Activated T-helper 2 cell treated with anti-CD3 and anti-CD28 coated beads, Interferon-gamma antibody, Interleukin-2, Interleukin-4, amounts not matched to agents 10 μg/mL and 5 μg/mL and 100 μg/mL, durations not matched to agents 14 hours and 24 hours and 36 hours (primary cell): ENCODE measurements at regions of chr1 and their contacts with region 1.

Region 1: GRCh38 chr1:205199090-205199930 is 12.2 kb downstream of the DSTYK start:
- DNase-seq: no peak
- H3K4me3 Mint-ChIP-seq: peak overlapping the region; percentile 47
- H3K27ac Mint-ChIP-seq: peak overlapping the region; percentile 94
- H3K4me1 Mint-ChIP-seq: peaks cover 57% of the 10 kb centered on the region
- H3K27me3 Mint-ChIP-seq: no peaks in the 10 kb centered on the region

Region 2: GRCh38 chr1:205121660-205122488 is 77.4 kb before region 1 on chr1 and contains the start of gene RBBP5:
- intact Hi-C with region 1: loop called (anchors 1 kb)
- DNase-seq: peak; percentile 90
- H3K4me3 Mint-ChIP-seq: peak within 1 kb of the TSS; percentile 98
- H3K27ac Mint-ChIP-seq: peak within 1 kb of the TSS; percentile 99
- H3K4me1 Mint-ChIP-seq: peaks cover 35% of the 10 kb centered on the region
- H3K27me3 Mint-ChIP-seq: no peaks in the 10 kb centered on the region
- total RNA-seq, gene RBBP5: 19.2 and 21.6 TPM in 2 replicates

Region 3: DNA sequence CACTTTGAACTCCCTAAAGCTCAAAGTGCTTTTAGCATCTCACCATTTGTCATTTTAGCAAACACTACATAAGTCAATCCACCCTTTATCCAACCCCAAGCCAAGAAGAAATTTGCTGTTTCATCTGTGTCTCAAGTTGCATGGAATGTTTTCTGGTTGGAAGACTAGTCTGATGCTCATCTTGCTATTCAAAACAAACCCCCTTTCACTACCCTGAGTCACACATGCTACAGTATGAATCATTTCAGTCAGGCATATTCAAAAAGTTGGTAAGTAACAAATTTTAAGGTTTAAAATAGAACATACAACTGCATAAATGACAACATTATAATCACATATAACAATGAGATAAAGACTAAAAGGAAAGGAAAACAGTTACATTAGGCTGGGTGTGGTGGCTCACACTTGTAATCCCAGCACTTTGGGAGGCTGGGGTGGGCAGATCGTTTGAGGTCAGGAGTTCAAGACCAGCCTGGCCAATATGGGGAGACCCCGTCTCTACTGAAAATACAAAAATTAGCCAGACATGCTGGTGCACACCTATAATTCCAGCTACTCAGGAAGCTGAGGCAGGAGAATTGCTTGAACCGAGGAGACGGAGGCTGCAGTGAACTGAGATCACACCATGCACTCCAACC is 26.5 kb before region 1 on chr1:
- intact Hi-C with region 1: loop called (anchors 2 kb)
- DNase-seq: no peak
- H3K4me3 Mint-ChIP-seq: no peak overlapping the region
- H3K27ac Mint-ChIP-seq: peak overlapping the region; percentile 39
- H3K4me1 Mint-ChIP-seq: peaks cover 28% of the 10 kb centered on the region
- H3K27me3 Mint-ChIP-seq: no peaks in the 10 kb centered on the region

Region 4: DNA sequence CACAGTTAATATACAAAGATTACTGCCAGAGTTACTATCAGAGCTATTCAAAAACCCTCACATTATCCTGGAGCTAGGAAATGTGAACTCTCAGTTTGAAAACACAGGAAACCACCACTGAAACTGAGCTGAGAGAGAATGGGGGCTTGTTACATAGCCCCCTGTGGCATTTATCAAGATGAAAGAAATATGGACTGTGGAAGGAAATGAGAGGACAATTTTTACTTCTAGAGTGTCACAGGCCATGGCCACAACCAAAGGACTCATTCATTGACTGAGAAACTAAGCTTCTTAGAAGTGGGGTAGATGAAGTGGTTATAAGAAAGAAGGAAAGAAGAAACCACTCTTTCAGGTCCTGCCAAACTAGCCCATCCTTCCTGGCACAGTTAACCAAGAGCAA is 13.1 kb before region 1 on chr1:
- intact Hi-C with region 1: loop called (anchors 1 kb)
- DNase-seq: no peak
- H3K4me3 Mint-ChIP-seq: no peak overlapping the region
- H3K27ac Mint-ChIP-seq: peak overlapping the region; percentile 66
- H3K4me1 Mint-ChIP-seq: peaks cover 43% of the 10 kb centered on the region
- H3K27me3 Mint-ChIP-seq: no peaks in the 10 kb centered on the region

Region 5: DNA sequence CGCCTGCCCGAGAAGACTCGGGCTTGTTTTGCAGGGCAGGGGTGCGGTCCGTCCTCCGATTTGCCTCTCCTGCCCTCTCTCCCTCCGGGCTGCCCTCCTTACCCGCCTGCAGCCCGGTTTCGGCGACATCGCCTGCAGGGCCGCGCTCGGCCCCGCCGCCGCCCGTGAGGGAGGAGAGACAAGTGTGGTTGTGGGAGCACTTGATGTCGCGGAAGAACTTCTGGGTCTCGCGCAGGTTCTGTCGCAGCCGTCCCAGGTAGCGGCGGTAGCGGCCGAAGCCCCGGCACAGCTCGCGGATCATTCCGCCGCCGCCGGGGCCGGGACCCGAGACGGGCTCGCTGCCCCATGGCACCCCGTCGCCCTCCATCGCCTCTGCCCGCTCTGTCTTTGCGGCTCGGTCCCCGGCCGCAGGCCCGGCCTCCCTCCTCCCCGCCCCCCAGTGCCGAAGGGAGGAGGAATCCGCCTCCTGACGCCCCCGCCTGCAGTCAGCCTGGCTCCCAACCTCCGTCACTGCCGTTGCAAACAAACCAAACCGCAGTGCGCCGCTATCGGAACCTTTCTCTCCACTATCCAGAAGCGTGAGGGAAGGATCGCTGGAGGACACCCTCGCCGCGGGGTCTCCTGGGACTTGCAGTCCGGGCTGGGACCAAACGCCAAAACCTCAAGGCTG is 12.0 kb after region 1 on chr1 and contains the start of gene DSTYK:
- intact Hi-C with region 1: loop called (anchors 1 kb)
- DNase-seq: peak; percentile 87
- H3K4me3 Mint-ChIP-seq: peak within 1 kb of the TSS; percentile 89
- H3K27ac Mint-ChIP-seq: peak within 1 kb of the TSS; percentile 95
- H3K4me1 Mint-ChIP-seq: peaks cover 36% of the 10 kb centered on the region
- H3K27me3 Mint-ChIP-seq: no peaks in the 10 kb centered on the region
- total RNA-seq, gene DSTYK: 27.3 and 28.6 TPM in 2 replicates

Region 6: DNA sequence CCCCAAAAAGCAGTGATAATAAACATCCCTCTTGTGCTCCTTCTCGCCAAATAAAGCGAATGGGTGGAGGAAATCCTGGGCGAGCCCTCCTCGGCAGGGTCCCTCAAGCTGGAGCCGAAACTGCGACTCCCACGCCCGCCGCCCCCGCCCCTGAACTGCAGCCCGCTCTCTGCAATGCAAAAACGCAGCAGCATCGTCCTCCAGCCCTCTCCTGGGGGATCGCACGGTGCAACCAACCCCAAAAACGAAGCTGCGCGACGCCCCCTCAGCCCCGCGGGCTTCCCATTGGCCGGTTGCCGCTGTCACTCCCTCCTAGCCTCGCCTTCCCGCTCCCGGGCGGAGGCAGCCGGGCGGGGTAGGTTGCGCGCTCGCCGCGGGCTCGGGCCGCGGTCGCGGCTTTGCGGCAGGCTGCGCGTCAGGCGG is 28.3 kb after region 1 on chr1 and contains the start of gene TMCC2:
- intact Hi-C with region 1: loop called (anchors 1 kb)
- DNase-seq: peak; percentile 75
- H3K4me3 Mint-ChIP-seq: peak within 1 kb of the TSS; percentile 97
- H3K27ac Mint-ChIP-seq: peak within 1 kb of the TSS; percentile 85
- H3K4me1 Mint-ChIP-seq: peaks cover 39% of the 10 kb centered on the region
- H3K27me3 Mint-ChIP-seq: peaks cover 30% of the 10 kb centered on the region
- total RNA-seq, gene TMCC2: 13.4 and 14.0 TPM in 2 replicates

Region 7: GRCh38 chr1:205237526-205238484 is 38.5 kb after region 1 on chr1:
- intact Hi-C with region 1: loop called (anchors 1 kb)
- DNase-seq: no peak
- H3K4me3 Mint-ChIP-seq: peak overlapping the region; percentile 43
- H3K27ac Mint-ChIP-seq: peak overlapping the region; percentile 91
- H3K4me1 Mint-ChIP-seq: peaks cover 38% of the 10 kb centered on the region
- H3K27me3 Mint-ChIP-seq: no peaks in the 10 kb centered on the region